ENCODE measurements at regions of chr15 and their contacts with region 1.

Region 1: DNA sequence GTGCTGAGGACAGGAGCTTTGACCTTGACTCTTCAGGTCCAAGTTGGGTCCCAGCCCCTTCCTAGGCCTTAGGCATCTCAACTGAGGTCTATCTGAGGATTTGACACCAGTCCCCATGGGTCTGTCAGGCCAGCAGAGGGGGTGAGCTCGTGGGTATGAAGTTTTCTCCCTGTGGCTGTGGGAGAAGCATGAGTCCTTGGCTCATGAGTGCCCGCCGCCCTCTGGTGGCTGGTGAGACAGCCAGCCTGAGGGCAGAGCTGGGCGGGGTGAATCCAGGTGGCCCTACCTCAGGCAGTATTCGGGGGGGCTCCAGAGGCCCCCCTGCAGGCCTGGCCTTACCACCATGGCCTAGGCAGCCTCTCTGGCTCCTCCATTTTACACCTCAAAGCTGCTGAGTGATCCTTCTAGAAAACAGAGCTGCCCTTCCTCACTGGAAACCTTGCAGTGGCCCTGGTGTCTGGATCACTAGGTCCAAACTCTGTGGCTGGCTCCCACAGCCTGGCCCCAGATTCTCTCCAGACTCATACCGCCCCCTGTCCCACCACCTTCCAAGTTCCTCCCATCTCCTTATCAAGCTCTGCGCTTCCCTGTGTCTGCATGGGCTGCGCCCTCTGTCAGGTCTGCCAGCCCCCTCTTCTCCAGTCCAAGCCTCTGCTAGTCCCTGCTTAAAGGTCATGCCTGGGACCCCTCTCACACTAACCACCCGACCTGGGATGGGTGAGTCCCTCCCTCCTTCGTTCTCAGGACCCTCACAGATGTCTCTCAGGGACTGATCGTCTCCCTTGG is 16.1 kb downstream of the SH2D7 start:
- DNase-seq: peak; percentile 92

Region 2: DNA sequence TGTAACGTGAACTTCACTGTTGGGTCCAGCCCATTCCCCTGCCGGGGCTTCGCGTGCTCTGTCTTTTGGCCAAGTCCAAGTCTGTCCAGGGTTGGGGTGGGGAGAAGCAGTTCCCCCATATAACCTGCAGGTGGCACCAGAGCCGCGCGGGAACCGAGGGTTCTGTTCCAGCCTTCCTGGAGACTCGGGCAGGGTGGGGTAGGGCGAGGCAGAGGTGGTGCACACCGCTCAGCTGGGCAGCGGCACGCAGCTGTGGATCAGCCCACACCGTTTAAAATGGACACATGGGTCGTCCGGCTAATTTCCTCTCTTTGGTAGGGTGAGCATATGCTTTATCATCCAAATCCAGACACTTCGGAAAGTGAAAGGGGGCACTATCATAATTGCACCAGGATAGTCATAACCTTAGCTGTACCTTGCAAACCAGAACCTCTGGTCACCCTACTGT is 149.0 kb before region 1 on chr15:
- intact Hi-C with region 1: loop called (anchors 2 kb)
- DNase-seq: peak; percentile 92

Region 3: GRCh38 chr15:77966540-77967290 is 141.8 kb before region 1 on chr15:
- intact Hi-C with region 1: loop called (anchors 1 kb)
- DNase-seq: no peak

Region 4: DNA sequence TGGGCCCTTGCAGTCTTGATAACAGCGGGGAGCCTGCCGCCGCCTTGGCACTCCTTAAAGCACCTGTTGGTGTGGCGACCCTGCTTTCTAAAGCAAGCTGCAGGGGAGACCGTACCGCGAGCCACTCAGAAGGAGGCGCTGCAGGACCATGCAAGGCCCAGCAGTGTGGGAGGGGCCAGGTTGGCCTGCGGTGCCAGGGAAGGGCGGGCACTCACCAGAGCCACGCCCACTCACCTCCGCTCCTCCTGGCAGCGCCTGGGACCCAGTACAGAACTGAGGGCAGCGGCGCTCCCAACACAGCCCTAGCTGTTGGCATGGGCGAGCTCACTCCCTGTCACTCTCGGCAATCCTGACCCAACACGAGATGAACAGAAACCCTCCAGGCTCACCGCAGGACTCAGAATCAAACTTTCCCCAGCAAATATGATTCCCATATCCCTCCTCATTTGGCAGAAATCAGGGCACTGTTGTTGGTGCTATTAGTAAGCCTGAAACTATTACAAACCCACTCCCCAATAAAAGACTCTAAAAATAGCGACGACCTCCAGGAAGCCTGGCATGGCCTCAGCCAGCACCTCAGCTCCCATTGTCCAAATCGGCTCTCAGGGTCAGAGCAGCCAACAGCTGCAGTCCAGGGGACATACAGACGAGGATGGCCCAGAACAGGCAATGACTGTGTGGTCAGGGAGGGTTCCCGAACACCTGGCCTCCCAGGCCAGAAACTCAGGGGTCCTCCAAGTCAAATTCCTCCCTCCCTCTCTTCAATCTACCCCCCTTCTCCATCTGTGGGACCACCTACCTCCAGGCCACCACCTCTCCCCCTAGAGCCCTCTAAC is 108.2 kb before region 1 on chr15:
- intact Hi-C with region 1: loop called (anchors 2 kb)
- DNase-seq: peak; percentile 87

Region 5: DNA sequence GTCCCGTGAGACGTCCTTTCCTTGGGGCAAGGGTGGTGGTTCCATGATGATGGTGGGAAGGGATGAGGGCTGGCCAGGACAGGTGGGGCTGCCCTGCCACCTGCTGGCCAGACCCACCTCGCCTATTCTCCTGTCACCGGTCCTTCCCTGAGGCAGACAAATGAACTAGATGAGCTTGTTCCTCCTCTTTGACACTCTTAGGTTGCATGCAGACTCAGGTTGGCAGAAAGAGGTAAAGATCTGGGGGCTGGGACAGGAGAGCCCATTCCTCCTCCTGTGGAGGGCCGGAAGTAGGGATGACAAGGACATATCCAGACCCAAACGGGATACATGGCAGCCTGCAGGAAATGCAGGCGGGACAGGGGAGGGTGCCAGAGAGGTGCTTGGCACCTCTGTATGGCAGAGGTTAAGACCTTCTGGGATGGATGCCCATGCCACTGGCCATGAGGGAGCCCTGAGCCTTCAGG is 87.3 kb after region 1 on chr15:
- intact Hi-C with region 1: loop called (anchors 2 kb)
- DNase-seq: peak; percentile 75

Region 6: GRCh38 chr15:78241007-78241406 is 132.5 kb after region 1 on chr15:
- intact Hi-C with region 1: loop called (anchors 2 kb)
- DNase-seq: peak; percentile 90

Region 7: GRCh38 chr15:78422571-78423340 is 314.3 kb after region 1 on chr15:
- intact Hi-C with region 1: loop called (anchors 10 kb)
- DNase-seq: no peak

Measured in cardiac septum (tissue), 1 donor.